ENCODE measurements at regions of chr17 and their contacts with region 1.

Region 1: DNA sequence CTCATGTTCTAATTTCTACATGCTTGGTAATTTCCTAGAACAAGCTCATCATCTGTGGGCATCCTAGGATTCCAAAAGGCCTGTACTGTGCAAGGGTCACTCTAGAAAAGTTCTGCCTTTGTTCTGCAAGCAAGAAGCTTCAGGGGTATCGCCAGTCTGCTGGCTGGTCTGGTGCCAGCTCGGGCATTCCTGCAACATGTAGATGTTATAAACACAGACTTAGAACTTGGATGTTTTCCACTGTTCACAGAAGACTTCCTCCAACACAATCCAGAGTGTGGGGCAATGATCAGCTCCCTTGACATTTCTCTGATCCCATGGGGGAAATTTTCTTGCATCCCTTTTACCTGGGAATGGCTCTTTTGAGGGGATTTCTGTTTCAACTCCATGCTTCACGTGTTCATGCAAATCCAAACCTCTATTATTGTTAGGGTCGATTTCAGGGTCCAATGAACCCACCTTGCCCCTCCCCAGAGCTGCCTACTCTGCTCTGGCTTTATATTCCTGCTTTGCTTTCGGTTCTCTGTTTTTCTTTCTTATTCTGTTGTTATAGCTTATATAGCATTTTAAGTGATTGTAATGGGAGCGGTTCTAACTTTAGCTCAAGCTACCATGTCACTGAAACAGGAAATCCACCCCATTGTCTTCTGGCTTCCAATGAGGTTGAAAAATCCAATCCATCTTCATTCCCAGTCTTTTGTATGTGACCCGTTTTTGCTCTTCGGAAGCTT is 25.3 kb downstream of the UBE2O start:
- DNase-seq: no peak
- H3K4me3 ChIP-seq: no peak overlapping the region
- H3K27ac ChIP-seq: no peak overlapping the region
- H3K4me1 ChIP-seq: no peaks in the 10 kb centered on the region
- H3K27me3 ChIP-seq: no peaks in the 10 kb centered on the region
- CTCF ChIP-seq: no peak

Region 2: GRCh38 chr17:74981979-74982662 is 1445.5 kb before region 1 on chr17:
- CTCF ChIA-PET with region 1: interaction called, 13 read pairs
- POLR2A ChIA-PET with region 1: no interaction called
- intact Hi-C with region 1: no loop called
- DNase-seq: peak; percentile 51 to 67
- H3K4me3 ChIP-seq: peak overlapping the region; percentile 64
- H3K27ac ChIP-seq: no peak overlapping the region
- H3K4me1 ChIP-seq: peaks cover 18% of the 10 kb centered on the region
- H3K27me3 ChIP-seq: no peaks in the 10 kb centered on the region
- CTCF ChIP-seq: no peak